Activated CD4-positive, alpha-beta T cell treated with anti-CD3 and anti-CD28 coated beads, Interleukin-2, amount 10 ng/mL, durations not matched to agents 24 days and 14 days (primary cell): ENCODE measurements at regions of chr15 and their contacts with region 1.

Region 1: DNA sequence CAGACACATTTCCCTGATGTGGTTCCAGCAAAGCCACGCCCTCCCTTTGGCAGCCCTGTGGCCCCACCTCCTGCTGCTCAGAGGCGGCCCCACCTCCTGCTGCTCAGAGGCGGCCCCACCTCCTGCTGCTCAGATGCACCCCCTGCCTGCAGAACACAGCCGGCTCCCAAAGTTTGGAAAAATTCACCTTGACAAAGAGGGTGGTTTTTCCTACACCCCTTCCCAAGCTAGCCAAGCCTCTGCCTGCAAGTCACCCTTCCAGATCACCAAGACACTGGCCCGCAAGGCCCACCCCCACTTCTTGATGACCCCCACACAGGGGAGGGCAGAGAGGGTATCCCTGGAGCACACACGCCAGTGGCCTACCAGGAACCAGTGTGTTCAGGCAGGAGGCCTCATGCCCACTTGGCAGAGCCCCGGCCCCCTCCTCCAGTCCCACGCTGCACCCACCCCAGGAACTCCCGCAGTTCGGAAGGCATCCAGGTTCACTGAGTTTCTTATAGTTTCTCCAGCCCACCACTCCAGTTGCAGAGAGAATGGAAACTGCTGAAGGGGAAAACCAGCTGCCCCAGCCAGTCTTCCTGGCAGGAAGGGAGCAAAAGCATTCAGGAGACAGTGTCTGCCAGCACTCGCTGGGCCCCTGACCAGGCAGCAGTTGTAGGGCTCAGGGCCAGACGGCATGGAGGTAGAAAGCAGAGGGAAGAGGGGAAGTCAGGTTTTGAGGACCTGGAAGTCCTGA is 2.3 kb upstream of the HAPLN3 start:
- DNase-seq: peak; percentile 95
- H3K4me3 Mint-ChIP-seq: no peak overlapping the region
- H3K27ac Mint-ChIP-seq: no peak overlapping the region
- H3K4me1 Mint-ChIP-seq: peaks cover 31% of the 10 kb centered on the region
- H3K27me3 Mint-ChIP-seq: no peaks in the 10 kb centered on the region

Region 2: DNA sequence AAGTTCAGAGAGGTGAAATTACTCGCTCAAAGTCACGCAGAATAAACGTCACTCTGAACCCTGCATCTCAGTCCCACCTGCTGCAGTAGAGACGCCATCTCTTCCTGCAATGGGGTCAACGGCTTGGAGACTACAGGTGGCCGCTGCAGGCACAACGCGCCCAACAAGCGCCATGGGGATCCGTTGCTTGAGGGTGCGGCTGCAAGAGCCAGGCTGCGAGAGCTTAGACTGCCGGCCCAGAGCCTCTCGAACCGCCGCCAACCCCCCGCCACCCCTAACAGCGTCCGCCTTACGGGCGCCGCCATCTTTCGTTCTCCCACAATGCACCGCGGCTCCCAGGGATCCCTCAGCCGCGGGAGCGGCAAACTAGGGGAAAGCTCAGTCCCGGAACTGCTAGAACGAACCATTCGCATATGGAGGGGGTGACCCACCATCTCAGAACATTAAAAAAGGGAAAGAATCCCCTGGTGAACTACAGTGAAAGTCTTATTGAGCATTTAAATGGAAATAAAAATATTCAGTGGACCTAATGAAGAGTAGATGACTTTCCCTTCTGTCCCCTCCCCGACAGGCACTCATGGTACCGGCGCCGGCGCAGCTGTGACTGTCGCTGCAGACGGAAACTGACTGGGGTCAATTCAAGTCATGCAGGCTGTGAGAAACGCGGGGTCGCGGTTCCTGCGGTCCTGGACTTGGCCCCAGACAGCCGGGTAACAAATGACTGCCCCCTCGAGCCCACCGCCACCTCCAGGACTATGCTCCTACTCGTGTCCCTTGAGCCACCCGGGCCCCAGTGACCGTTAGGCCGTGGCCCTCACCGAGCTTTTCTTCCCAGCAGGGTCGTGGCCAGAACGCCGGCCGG is 430.3 kb before region 1 on chr15 and contains the starts of genes MRPL46 and MRPS11:
- intact Hi-C with region 1: loop called (anchors 1 kb)
- DNase-seq: peak; percentile 97
- H3K4me3 Mint-ChIP-seq: peak within 1 kb of the TSS; percentile 93
- H3K27ac Mint-ChIP-seq: peak within 1 kb of the TSS; percentile 97
- H3K4me1 Mint-ChIP-seq: peaks cover 33% of the 10 kb centered on the region
- H3K27me3 Mint-ChIP-seq: no peaks in the 10 kb centered on the region
- total RNA-seq, gene MRPL46: 49.1 and 51.9 TPM in 2 replicates
- total RNA-seq, gene MRPS11: 68.7 and 72.6 TPM in 2 replicates

Region 3: DNA sequence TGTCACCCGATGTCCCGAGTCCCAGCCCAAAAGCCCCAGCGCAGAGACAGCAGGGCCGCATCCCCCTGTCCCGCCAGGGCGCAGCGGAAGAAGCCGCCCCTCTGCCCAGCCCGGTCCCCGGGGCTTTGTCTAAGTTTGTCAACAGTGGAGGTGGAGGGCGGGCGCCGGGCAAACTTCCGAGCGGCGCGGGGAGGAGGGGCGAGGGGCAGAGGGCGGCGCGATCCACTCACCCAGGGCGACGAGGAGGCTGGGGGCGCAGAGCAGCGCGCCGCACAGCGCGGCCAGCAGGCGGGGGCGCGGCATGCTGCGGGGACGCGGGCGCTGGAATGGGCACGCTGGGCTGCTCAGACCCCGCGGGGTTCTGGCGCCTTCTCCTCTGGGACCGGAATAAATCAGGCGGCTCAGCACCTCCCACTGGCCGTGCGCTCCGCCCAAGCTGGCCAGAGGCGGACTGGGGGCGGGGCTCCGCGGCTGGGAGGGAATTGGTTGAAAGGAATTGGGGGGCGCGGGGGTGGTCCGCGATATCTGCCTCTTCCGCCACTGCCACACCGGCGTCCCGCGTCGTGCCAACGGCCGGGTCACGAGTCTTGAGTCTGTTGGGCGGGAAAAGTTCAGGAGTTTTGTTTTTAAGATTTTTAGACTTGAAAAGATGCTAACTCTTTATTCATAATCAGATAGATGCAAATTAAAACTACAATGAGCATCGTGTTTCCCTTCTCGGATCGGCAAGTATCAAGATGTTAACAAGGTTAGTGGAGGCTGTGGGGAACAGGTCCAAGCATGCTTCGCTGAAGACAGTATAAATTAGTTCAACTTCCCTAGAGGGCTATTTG is 15.6 kb after region 1 on chr15 and contains the start of gene MFGE8:
- intact Hi-C with region 1: loop called (anchors 2 kb)
- DNase-seq: peak; percentile 93
- H3K4me3 Mint-ChIP-seq: peak within 1 kb of the TSS; percentile 89
- H3K27ac Mint-ChIP-seq: peak within 1 kb of the TSS; percentile 71
- H3K4me1 Mint-ChIP-seq: peaks cover 14% of the 10 kb centered on the region
- H3K27me3 Mint-ChIP-seq: peaks cover 4% of the 10 kb centered on the region
- total RNA-seq, gene MFGE8: 7.3 and 10.6 TPM in 2 replicates

Region 4: DNA sequence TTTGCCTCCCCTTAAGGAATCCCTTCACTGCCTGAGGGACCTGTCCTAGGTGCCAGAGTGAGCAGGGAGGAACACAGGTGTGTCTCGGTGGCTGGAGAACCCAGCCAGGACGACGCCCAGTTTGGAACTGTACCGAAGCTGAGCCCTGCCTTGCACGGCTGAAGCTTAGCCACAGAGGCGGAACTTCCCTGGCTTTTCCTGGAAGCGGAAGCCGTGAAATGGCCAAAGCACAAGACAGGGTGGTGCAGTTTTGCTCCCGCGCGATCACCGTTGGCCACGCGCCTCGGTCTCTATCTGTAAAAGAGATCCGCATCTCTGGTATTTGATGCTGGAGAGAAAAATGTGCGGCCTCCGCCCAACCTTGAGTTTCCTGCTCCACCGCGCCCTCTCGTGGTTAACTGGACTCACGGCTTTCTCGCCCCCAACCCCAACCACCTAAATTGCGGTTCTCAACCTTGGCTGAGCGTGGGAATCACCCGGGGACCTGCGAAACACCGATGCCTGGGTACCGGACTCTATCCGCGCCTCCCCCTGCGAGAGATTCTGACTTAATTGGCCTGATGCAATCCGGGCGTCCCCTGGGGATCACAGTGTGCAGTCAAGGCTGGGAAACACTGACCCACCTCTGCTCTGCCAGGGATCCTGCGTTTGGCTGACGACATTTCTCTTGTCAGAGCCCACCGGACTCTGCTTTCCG is 119.9 kb after region 1 on chr15:
- intact Hi-C with region 1: loop called (anchors 1 kb)
- DNase-seq: peak; percentile 95
- H3K4me3 Mint-ChIP-seq: peak overlapping the region; percentile 74
- H3K27ac Mint-ChIP-seq: no peak overlapping the region
- H3K4me1 Mint-ChIP-seq: peaks cover 19% of the 10 kb centered on the region
- H3K27me3 Mint-ChIP-seq: peaks cover 35% of the 10 kb centered on the region

Region 5: DNA sequence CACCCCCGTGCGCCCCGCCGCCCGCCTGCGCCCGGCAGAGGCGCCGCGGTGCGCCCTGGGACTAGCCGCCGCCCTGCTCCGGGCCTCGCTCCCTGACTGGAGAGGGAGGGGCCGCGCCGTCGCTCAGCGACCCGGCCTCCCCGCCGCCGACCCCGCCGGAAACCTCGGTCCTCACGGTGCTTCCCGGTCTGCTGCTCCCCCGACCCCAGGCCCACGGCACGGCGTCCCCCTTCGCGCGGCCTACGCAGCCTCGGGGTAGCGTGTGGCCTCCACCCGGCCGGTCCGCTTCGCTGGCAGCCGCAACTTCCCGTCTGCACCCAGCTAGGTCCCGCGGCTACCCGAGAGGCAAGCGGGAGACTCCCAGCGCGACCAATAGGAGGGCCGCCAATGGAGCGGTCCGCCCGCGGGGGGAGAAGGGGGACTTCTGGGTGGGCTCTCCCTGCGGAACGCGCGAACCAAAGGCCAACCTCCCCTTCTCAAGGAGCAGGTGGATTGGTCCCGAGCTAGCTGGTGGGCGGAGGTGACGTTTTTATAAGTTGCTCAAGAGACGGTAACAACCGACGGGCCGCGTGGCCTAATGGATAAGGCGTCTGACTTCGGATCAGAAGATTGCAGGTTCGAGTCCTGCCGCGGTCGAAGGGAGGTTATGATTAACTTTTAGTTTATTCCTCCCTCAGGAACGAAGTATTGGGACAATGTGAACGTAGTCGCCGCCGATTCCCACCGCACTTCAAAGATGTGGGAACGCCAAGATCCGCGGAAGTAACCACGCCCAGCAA is 437.1 kb after region 1 on chr15 and contains the start of gene POLG:
- intact Hi-C with region 1: loop called (anchors 10 kb)
- DNase-seq: peak; percentile 100
- H3K4me3 Mint-ChIP-seq: peak within 1 kb of the TSS; percentile 87
- H3K27ac Mint-ChIP-seq: peak within 1 kb of the TSS; percentile 95
- H3K4me1 Mint-ChIP-seq: peaks cover 50% of the 10 kb centered on the region
- H3K27me3 Mint-ChIP-seq: peaks cover 9% of the 10 kb centered on the region
- total RNA-seq, gene POLG: 124 and 134 TPM in 2 replicates